Activated naive CD4-positive, alpha-beta T cell treated with anti-CD3 and anti-CD28 coated beads for 36 hours (primary cell): ENCODE measurements at regions of chr18 and their contacts with region 1.

Region 1: GRCh38 chr18:70598406-70598805 is 309.6 kb downstream of the SOCS6 start:
- DNase-seq: no peak
- H3K4me3 Mint-ChIP-seq: no peak overlapping the region
- H3K27ac Mint-ChIP-seq: no peak overlapping the region
- H3K4me1 Mint-ChIP-seq: peaks cover 15% of the 10 kb centered on the region
- H3K27me3 Mint-ChIP-seq: no peaks in the 10 kb centered on the region

Region 2: GRCh38 chr18:70015127-70015526 is 583.3 kb before region 1 on chr18:
- CTCF ChIA-PET with region 1: no interaction called
- intact Hi-C with region 1: no loop called
- DNase-seq: no peak
- H3K4me3 Mint-ChIP-seq: no peak overlapping the region
- H3K27ac Mint-ChIP-seq: no peak overlapping the region
- H3K4me1 Mint-ChIP-seq: no peaks in the 10 kb centered on the region
- H3K27me3 Mint-ChIP-seq: no peaks in the 10 kb centered on the region

Region 3: GRCh38 chr18:70781860-70782453 is 183.6 kb after region 1 on chr18:
- CTCF ChIA-PET with region 1: interaction called, 8 read pairs
- intact Hi-C with region 1: loop called (anchors 1 kb)
- DNase-seq: peak; percentile 85
- H3K4me3 Mint-ChIP-seq: no peak overlapping the region
- H3K27ac Mint-ChIP-seq: no peak overlapping the region
- H3K4me1 Mint-ChIP-seq: peaks cover 20% of the 10 kb centered on the region
- H3K27me3 Mint-ChIP-seq: no peaks in the 10 kb centered on the region

Region 4: DNA sequence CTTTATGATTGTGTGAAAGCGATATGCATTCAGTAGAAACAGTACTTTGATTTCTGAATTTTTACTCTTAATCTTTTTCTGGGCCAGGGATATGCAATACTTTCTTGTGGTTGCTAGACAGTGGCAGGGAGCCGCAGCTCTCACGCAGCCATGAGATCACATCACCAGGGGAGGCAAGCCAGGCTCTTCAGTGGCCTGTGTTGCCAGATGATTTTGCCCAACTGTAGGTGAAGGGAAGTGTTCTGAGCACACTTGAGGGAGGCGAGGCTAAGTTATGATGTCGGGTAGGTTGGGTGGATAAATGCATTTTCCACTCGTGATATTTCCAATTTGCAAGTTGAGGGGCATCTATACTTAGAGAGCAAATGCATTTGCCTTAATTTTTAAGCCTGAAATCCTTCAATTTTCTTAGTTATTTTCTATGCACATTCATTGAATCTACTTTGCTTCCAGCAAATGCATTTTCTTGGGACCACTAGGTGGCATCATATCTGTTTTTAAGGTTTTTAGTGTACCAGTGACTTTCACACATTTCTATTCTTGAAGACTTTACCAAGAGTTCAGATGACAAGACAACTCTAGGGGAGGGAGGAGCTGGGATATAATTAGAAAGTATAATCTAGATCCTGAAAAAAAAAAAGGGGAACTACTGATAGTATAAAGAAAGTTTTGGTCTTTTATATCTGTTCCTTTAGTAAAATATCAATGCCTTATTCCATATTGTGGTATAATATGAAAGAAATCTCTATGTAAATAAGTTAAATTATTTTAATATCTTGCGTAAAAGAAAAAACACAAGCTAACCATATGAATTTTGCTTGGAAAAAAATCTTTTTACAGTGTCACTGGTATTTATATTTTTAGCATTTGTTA is 333.8 kb after region 1 on chr18:
- CTCF ChIA-PET with region 1: no interaction called
- intact Hi-C with region 1: loop called (anchors 5 kb)
- DNase-seq: no peak
- H3K4me3 Mint-ChIP-seq: no peak overlapping the region
- H3K27ac Mint-ChIP-seq: no peak overlapping the region
- H3K4me1 Mint-ChIP-seq: peaks cover 6% of the 10 kb centered on the region
- H3K27me3 Mint-ChIP-seq: no peaks in the 10 kb centered on the region

Region 5: GRCh38 chr18:71784777-71785176 is 1186.4 kb after region 1 on chr18:
- CTCF ChIA-PET with region 1: no interaction called
- intact Hi-C with region 1: loop called (anchors 2 kb)
- DNase-seq: peak; percentile 26
- H3K4me3 Mint-ChIP-seq: no peak overlapping the region
- H3K27ac Mint-ChIP-seq: no peak overlapping the region
- H3K4me1 Mint-ChIP-seq: no peaks in the 10 kb centered on the region
- H3K27me3 Mint-ChIP-seq: no peaks in the 10 kb centered on the region